Naive thymus-derived CD8-positive, alpha-beta T cell (primary cell): ENCODE measurements at regions of chr6 and their contacts with region 1.

Region 1: GRCh38 chr6:27838058-27838944 is 73.9 kb downstream of the OR2B2 start:
- DNase-seq: peak; percentile 63 to 95 (median 88)
- ATAC-seq: peak; percentile 78 to 81
- H3K4me3 Mint-ChIP-seq: no peak overlapping the region
- H3K27ac Mint-ChIP-seq: no peak overlapping the region
- H3K4me1 Mint-ChIP-seq: peaks cover 8 to 36% (median 18%) of the 10 kb centered on the region in 4 donors
- H3K27me3 Mint-ChIP-seq: peaks cover 0 to 8% (median 0%) of the 10 kb centered on the region in 5 donors

Region 2: DNA sequence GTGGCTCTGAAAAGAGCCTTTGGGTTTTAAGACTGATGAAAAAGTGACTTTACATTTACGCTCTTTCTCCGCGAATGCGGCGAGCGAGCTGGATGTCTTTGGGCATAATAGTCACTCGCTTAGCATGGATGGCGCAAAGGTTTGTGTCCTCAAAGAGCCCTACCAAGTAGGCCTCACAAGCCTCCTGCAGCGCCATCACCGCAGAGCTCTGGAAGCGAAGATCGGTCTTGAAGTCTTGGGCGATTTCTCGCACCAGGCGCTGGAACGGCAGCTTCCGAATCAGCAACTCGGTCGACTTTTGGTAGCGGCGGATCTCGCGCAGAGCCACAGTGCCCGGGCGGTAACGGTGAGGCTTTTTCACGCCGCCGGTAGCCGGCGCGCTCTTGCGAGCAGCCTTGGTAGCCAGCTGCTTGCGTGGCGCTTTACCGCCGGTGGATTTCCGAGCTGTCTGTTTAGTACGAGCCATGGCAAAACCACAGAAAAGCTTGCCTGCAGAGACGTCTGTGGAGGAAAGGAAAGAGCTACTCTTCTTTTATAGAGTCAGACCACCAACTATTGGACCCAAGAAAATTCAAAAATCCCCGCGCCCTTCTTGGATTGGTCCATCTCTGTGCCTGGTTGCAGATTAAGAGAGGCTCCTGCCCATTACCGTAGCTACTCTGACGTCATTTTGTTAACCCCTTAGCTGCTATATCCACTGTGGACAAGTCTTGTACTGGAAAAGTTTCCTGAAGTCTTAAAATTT is 1806.5 kb before region 1 on chr6:
- POLR2A ChIA-PET with region 1: interaction called, 20 read pairs
- DNase-seq: peak; percentile 71 to 96 (median 91)
- ATAC-seq: peak; percentile 67 to 71
- H3K4me3 Mint-ChIP-seq: peak overlapping the region; percentile 94 to 97 (median 95)
- H3K27ac Mint-ChIP-seq: peak overlapping the region; percentile 93 to 99 (median 96)
- H3K4me1 Mint-ChIP-seq: peaks cover 11 to 52% (median 41%) of the 10 kb centered on the region in 4 donors
- H3K27me3 Mint-ChIP-seq: peaks cover 0 to 2% (median 0%) of the 10 kb centered on the region in 5 donors

Region 3: GRCh38 chr6:27825025-27825793 is 13.1 kb before region 1 on chr6:
- POLR2A ChIA-PET with region 1: interaction called, 308 read pairs
- DNase-seq: peak in 1 of 10 donors; percentile 40
- ATAC-seq: no peak
- H3K4me3 Mint-ChIP-seq: peak overlapping the region; percentile 83 to 99 (median 92)
- H3K27ac Mint-ChIP-seq: peak overlapping the region; percentile 96 to 100 (median 97)
- H3K4me1 Mint-ChIP-seq: peaks cover 8 to 43% (median 31%) of the 10 kb centered on the region in 4 donors
- H3K27me3 Mint-ChIP-seq: no peaks in the 10 kb centered on the region

Region 4: DNA sequence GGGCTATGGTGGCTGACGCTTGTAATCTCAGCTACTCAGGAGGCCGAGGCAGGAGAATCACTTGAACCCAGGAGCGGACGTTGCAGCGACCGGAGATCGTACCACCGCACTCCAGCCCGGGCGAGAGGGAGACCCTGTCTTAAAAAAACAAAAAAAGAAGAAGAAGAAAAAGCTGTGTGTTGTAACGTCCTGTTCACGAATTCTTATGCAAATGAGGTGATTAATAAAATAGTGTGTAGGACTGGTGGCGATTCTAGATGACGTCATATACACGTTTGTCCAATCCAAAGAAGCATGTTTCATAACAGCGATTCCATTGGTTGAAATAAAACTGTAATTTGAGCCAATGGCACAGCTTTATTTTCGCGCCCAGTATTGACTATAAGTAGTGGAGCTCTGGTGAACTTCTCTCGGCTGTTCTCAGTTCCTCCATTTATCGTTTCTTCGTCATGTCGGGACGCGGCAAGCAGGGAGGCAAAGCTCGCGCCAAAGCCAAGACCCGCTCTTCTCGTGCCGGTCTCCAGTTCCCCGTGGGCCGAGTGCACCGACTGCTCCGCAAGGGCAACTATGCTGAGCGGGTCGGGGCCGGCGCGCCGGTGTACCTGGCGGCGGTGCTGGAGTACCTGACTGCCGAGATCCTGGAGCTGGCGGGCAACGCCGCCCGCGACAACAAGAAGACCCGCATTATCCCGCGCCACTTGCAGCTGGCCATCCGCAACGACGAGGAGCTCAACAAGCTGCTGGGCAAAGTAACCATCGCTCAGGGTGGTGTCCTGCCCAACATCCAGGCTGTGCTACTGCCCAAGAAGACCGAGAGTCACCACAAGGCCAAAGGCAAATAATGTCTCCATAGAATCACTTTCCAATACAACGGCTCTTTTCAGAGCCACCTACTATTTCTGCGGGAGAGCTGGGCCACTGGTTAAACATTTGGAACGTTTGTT is 26.9 kb after region 1 on chr6:
- POLR2A ChIA-PET with region 1: interaction called, 793 read pairs
- DNase-seq: peak; percentile 43 to 91 (median 80)
- ATAC-seq: peak; percentile 81
- H3K4me3 Mint-ChIP-seq: peak overlapping the region; percentile 87 to 99 (median 98)
- H3K27ac Mint-ChIP-seq: peak overlapping the region; percentile 87 to 99 (median 96)
- H3K4me1 Mint-ChIP-seq: peaks cover 15 to 45% (median 39%) of the 10 kb centered on the region in 4 donors
- H3K27me3 Mint-ChIP-seq: no peaks in the 10 kb centered on the region

Region 5: GRCh38 chr6:27986928-27987725 is 148.8 kb after region 1 on chr6:
- POLR2A ChIA-PET with region 1: no interaction called
- DNase-seq: no peak
- ATAC-seq: no peak
- H3K4me3 Mint-ChIP-seq: no peak overlapping the region
- H3K27ac Mint-ChIP-seq: no peak overlapping the region
- H3K4me1 Mint-ChIP-seq: no peaks in the 10 kb centered on the region
- H3K27me3 Mint-ChIP-seq: peaks cover 16 to 53% (median 32%) of the 10 kb centered on the region in 5 donors

Region 6: GRCh38 chr6:28252009-28252975 is 414.0 kb after region 1 on chr6 and contains the start of gene ZKSCAN4:
- POLR2A ChIA-PET with region 1: no interaction called
- DNase-seq: peak; percentile 55 to 91 (median 82)
- ATAC-seq: peak; percentile 83 to 93
- H3K4me3 Mint-ChIP-seq: peak within 1 kb of the TSS; percentile 88 to 100 (median 98)
- H3K27ac Mint-ChIP-seq: peak within 1 kb of the TSS; percentile 91 to 98 (median 95)
- H3K4me1 Mint-ChIP-seq: peaks cover 18 to 48% (median 46%) of the 10 kb centered on the region in 4 donors
- H3K27me3 Mint-ChIP-seq: peaks cover 0 to 2% (median 0%) of the 10 kb centered on the region in 5 donors
- polyA plus RNA-seq, gene ZKSCAN4: 3.4 to 7.1 (median 4.1) TPM